Activated CD8-positive, alpha-beta T cell treated with anti-CD3 and anti-CD28 coated beads for 36 hours (primary cell): ENCODE measurements at regions of chr2 and their contacts with region 1.

Region 1: DNA sequence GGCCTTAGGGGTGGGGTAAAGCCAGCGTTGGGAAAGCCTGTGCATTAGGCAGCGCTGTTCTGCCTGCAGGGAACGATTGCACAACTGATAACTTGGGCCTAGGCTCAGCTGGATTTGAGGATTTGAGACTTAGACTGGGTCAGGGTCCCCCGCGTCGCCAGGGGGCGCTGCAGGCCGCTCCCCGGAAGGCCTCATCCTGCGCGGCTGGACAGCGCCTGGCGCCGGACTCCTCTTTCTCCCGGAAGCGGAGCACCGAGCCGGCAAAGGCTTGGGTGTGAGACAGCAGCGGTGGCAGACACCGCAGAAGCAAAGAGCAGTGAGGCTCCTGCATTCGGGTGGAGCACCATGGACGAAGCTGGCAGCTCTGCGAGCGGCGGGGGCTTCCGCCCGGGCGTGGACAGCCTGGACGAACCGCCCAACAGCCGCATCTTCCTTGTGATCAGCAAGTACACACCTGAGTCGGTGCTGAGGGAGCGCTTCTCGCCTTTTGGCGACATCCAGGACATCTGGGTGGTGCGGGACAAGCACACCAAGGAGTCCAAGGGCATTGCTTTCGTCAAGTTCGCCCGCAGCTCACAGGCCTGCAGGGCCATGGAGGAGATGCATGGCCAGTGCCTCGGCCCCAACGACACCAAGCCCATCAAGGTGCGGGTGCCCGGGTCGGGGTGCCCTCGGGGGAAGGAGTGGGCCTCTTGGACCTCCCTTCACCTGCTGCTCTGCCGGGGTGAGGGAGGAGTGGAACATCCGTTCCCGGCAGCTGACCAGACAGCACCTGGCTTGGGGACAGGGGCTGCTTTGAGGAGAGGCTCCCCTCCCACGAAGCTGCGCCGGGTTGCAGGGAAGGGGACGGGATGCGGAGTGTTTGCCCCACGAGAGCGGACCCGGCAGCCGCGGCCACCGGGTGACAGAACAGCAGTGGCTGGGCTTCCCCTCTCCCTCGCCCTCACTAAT is at the start of gene RBM45:
- DNase-seq: peak; percentile 92
- ATAC-seq: peak; percentile 94
- H3K4me3 Mint-ChIP-seq: peak within 1 kb of the TSS; percentile 93
- H3K27ac Mint-ChIP-seq: peak within 1 kb of the TSS; percentile 77
- H3K4me1 Mint-ChIP-seq: peaks cover 29% of the 10 kb centered on the region
- H3K27me3 Mint-ChIP-seq: no peaks in the 10 kb centered on the region
- CTCF ChIP-seq: peak; percentile 96
- total RNA-seq, gene RBM45: 9.0 to 10.6 TPM

Region 2: GRCh38 chr2:177078416-177078815 is 1034.1 kb before region 1 on chr2:
- CTCF ChIA-PET with region 1: no interaction called
- POLR2A ChIA-PET with region 1: no interaction called
- intact Hi-C with region 1: no loop called
- DNase-seq: no peak
- ATAC-seq: no peak
- H3K4me3 Mint-ChIP-seq: no peak overlapping the region
- H3K27ac Mint-ChIP-seq: no peak overlapping the region
- H3K4me1 Mint-ChIP-seq: no peaks in the 10 kb centered on the region
- H3K27me3 Mint-ChIP-seq: peaks cover 3% of the 10 kb centered on the region
- CTCF ChIP-seq: no peak

Region 3: DNA sequence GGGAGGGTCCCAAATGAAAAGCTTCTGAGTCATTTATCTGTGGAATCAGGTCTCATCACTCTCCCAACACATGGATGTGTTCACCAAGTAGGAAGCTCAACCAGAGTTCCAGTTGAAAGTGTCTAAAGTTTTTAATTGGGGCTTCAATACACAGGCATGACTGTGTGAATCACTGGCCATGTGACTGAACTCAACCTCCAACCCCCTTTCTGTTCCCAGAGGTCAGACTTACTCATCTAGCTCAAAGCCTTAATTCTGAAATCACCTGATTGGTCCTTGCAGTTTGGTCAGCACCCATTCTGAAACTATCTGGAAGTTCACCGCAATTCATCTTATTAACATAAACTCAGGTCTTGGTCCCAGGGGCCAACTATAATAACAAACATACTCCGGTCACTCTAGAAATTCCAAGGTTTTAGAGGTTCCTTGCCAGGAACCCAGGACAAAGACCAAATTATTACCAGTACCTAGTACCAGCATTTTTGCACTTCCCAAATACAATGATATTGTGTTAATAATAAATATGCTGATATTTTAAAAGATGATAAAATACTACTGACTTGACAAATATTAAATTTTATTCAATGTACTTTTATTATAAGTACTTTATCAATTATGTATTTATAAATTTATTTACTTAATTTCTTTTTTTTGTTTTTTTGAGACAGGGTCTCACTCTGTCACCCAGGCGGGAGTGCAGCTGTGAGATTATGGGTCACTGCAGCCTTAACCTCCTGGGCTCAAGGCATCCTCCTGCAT is 11.0 kb before region 1 on chr2:
- CTCF ChIA-PET with region 1: interaction called, 19 read pairs
- POLR2A ChIA-PET with region 1: no interaction called
- intact Hi-C with region 1: no loop called
- DNase-seq: no peak
- ATAC-seq: no peak
- H3K4me3 Mint-ChIP-seq: no peak overlapping the region
- H3K27ac Mint-ChIP-seq: no peak overlapping the region
- H3K4me1 Mint-ChIP-seq: no peaks in the 10 kb centered on the region
- H3K27me3 Mint-ChIP-seq: peaks cover 2% of the 10 kb centered on the region
- CTCF ChIP-seq: no peak

Region 4: DNA sequence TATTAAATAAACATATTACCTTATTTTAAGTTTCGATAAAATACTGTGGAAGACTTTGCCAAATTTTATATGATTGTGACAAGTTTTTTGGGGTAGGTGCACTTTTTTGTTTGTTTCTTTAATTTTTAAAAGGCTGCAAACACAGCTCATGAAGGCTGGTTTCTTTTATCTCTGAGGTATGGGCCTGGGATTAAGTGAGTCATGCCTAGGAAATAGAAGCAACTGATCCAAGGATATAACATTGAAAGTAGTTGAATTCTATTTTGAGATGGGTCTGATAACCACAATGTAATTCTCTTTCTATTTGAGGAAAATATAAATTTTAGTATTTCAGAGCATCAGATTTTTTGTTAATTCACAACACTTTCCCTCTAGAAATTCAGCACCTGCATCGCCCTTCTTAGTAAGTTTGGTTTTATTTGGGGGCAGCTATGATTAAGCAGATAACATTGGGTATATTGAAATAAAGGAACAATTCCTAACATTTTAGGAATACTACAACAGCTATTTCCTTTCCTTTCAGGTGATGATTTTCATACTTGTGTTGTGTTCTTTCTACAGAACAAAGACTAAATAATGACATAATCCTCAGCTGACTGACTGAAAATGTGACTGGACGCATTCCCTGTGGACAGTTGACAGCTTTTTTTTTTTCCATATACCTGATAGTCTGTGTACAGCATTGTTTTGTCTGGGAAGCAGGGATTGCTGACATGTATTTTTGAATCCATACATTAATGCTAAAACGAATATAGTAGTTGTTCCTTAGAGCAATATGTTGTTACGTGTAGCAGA is 16.6 kb after region 1 on chr2:
- CTCF ChIA-PET with region 1: interaction called, 31 read pairs
- POLR2A ChIA-PET with region 1: interaction called, 4 read pairs
- intact Hi-C with region 1: no loop called
- DNase-seq: no peak
- ATAC-seq: no peak
- H3K4me3 Mint-ChIP-seq: no peak overlapping the region
- H3K27ac Mint-ChIP-seq: no peak overlapping the region
- H3K4me1 Mint-ChIP-seq: no peaks in the 10 kb centered on the region
- H3K27me3 Mint-ChIP-seq: no peaks in the 10 kb centered on the region
- CTCF ChIP-seq: no peak

Region 5: DNA sequence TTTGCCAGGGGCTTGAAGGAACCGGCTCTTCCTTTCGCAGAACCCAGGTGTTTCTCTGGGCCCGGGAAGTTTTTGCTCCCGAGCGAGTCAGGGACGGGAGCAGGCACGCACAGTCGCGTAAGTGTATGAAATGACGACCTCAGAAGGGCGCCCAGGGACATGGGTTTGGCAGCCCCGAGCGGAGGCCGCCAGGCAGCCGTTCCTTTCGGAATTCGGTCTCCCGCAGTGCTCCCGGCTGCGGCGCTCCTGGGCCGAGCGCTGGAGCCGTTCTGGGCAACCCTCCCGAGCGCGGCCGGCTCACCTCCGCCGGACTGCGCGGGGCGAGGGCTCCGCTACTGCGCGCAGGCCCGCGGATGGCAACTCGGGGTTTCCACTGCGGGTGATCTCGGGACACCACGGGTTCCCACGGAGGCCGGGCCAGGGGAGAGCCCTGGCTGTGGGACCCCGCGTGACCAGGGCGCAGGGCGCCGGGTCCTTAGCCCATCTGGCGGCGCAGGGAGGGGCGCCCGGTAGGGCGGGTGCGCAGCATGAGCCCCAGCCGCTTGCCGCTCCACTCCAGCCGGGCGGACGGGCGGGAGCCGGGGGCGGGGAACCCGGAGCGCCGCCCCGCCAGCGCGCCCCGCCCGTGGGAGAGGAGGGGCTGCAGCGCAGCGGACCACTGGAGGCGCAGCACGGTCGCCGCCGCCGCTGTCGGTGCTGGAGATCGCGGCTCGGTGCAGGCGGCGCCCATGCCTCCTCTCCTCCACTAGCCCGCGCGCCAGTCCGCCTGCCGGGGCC is 81.5 kb after region 1 on chr2 and contains the start of gene OSBPL6:
- CTCF ChIA-PET with region 1: interaction called, 8 read pairs
- POLR2A ChIA-PET with region 1: no interaction called
- intact Hi-C with region 1: loop called (anchors 2 kb)
- DNase-seq: peak; percentile 71
- ATAC-seq: peak; percentile 92
- H3K4me3 Mint-ChIP-seq: peak within 1 kb of the TSS; percentile 71
- H3K27ac Mint-ChIP-seq: no peak within 1 kb of the TSS
- H3K4me1 Mint-ChIP-seq: peaks cover 5% of the 10 kb centered on the region
- H3K27me3 Mint-ChIP-seq: peaks cover 55% of the 10 kb centered on the region
- CTCF ChIP-seq: peak; percentile 27
- total RNA-seq, gene OSBPL6: 2.5 to 4.0 TPM

Region 6: GRCh38 chr2:178280244-178280852 is 167.9 kb after region 1 on chr2:
- CTCF ChIA-PET with region 1: interaction called, 11 read pairs
- POLR2A ChIA-PET with region 1: no interaction called
- intact Hi-C with region 1: loop called (anchors 2 kb)
- DNase-seq: peak; percentile 63
- ATAC-seq: peak; percentile 92
- H3K4me3 Mint-ChIP-seq: no peak overlapping the region
- H3K27ac Mint-ChIP-seq: no peak overlapping the region
- H3K4me1 Mint-ChIP-seq: no peaks in the 10 kb centered on the region
- H3K27me3 Mint-ChIP-seq: peaks cover 10% of the 10 kb centered on the region
- CTCF ChIP-seq: peak; percentile 74

Region 7: GRCh38 chr2:178397002-178397605 is 284.6 kb after region 1 on chr2:
- CTCF ChIA-PET with region 1: interaction called, 14 read pairs
- POLR2A ChIA-PET with region 1: no interaction called
- intact Hi-C with region 1: no loop called
- DNase-seq: peak; percentile 8
- ATAC-seq: peak; percentile 72
- H3K4me3 Mint-ChIP-seq: no peak overlapping the region
- H3K27ac Mint-ChIP-seq: no peak overlapping the region
- H3K4me1 Mint-ChIP-seq: no peaks in the 10 kb centered on the region
- H3K27me3 Mint-ChIP-seq: peaks cover 3% of the 10 kb centered on the region
- CTCF ChIP-seq: peak; percentile 83

Region 8: GRCh38 chr2:178414266-178415247 is 302.1 kb after region 1 on chr2:
- CTCF ChIA-PET with region 1: interaction called, 34 read pairs
- POLR2A ChIA-PET with region 1: interaction called, 13 read pairs
- intact Hi-C with region 1: loop called (anchors 2 kb)
- DNase-seq: peak; percentile 92
- ATAC-seq: peak; percentile 83
- H3K4me3 Mint-ChIP-seq: peak overlapping the region; percentile 81
- H3K27ac Mint-ChIP-seq: peak overlapping the region; percentile 95
- H3K4me1 Mint-ChIP-seq: peaks cover 9% of the 10 kb centered on the region
- H3K27me3 Mint-ChIP-seq: no peaks in the 10 kb centered on the region
- CTCF ChIP-seq: peak; percentile 88